ENCODE measurements at regions of chr11 and their contacts with region 1.

Region 1: GRCh38 chr11:117205211-117205818 is 6.1 kb downstream of the TAGLN start:
- DNase-seq: peak in 4 of 10 donors; percentile 19 to 88 (median 60)

Region 2: DNA sequence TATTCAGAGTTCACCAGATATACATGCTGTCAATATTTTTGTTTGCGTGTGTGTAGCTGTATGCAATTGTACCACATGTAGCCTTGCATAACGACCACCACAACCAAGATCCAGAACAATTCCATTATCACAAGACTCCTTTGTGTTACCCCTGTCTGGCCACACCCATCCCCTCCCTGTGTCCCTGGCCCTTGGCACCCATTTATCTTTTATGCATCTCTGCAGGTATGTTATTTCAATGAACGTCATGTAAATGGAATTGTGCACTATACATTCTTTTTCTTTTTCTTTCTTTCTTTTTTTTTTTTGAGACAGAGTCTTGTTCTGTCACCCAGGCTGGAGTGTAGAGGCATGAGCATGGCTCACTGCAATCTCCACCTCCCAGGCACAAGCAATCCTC is 70.9 kb before region 1 on chr11:
- intact Hi-C with region 1: loop called (anchors 5 kb)
- DNase-seq: no peak